ENCODE measurements at regions of chr15 and their contacts with region 1.

Region 1: GRCh38 chr15:37059086-37059485 is 41.3 kb downstream of the MEIS2 start:
- DNase-seq: no peak
- ATAC-seq: peak in 3 of 4 donors; percentile 34 to 67 (median 35)
- H3K4me3 ChIP-seq: no peak overlapping the region
- H3K27ac ChIP-seq: peak overlapping the region in 10 of 12 donors; percentile 44 to 84 (median 68)
- H3K4me1 ChIP-seq: peaks cover 0 to 49% (median 29%) of the 10 kb centered on the region in 12 donors
- H3K27me3 ChIP-seq: no peaks in the 10 kb centered on the region
- CTCF ChIP-seq: no peak
- POLR2A ChIP-seq: no peak

Region 2: GRCh38 chr15:37079726-37080125 is 20.6 kb after region 1 on chr15:
- intact Hi-C with region 1: loop called in 1 of 10 experiments (anchors 2 kb)
- DNase-seq: peak in 1 of 5 donors; percentile 25
- ATAC-seq: peak in 3 of 4 donors; percentile 41 to 70 (median 68)
- H3K4me3 ChIP-seq: no peak overlapping the region
- H3K27ac ChIP-seq: peak overlapping the region in 6 of 12 donors; percentile 11 to 60 (median 34)
- H3K4me1 ChIP-seq: peaks cover 0 to 52% (median 32%) of the 10 kb centered on the region in 12 donors
- H3K27me3 ChIP-seq: no peaks in the 10 kb centered on the region
- CTCF ChIP-seq: no peak
- POLR2A ChIP-seq: no peak

Region 3: DNA sequence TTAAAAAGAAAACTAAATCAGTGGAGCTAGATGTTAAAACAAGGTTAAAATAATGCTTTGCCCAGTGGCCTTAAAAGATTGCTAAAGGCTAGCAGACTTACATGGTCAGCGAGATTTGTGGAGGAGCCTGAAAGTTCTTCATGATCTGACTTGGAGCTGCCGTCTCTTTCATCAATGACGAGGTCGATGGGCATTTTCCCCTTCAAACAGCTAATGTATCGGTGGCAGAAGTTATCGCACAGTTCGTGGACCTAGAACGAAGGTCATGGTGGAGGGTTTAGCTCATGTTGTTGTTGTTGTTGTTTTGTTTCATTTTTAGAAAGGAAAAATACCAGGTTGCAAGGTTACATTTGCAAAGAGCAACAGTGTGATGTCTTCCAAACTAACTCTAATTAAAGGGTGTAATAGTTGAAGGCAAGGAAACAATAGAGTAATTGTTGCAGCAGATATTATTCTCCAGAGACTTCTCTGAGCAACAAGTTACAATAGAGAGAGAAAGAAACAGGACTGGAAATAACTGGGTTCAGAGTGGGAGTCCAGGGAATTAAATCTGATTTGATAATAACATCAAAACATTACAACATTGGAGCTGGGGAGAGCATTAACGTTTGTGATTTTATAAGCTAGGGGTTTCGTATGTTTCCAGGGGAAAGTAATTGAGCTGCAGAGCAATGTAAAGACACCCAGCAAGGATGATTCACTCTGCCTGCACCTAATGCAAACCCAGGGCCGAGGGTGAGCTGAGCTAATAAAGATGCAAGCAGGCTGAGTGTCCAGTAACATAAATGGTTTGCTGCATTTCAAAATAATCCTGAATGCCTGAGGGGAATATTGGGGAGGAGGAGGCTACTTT is 34.6 kb after region 1 on chr15:
- intact Hi-C with region 1: loop called in 1 of 10 experiments (anchors 5 kb)
- DNase-seq: peak in 1 of 5 donors; percentile 21
- ATAC-seq: no peak
- H3K4me3 ChIP-seq: peak overlapping the region in 9 of 12 donors; percentile 10 to 80 (median 75)
- H3K27ac ChIP-seq: peak overlapping the region in 11 of 12 donors; percentile 92 to 98 (median 96)
- H3K4me1 ChIP-seq: peaks cover 0 to 61% (median 17%) of the 10 kb centered on the region in 12 donors
- H3K27me3 ChIP-seq: peaks cover 0 to 43% (median 0%) of the 10 kb centered on the region in 9 donors
- CTCF ChIP-seq: no peak
- POLR2A ChIP-seq: no peak

Measured in heart left ventricle (tissue), 16 donors.